ENCODE measurements at regions of chr1 and their contacts with region 1.

Region 1: GRCh38 chr1:11352816-11353799 is 80.1 kb downstream of the UBIAD1 start:
- DNase-seq: peak; percentile 37 to 71 (median 59)
- H3K4me3 ChIP-seq: peak overlapping the region in 6 of 7 experiments; percentile 0 to 62 (median 26)
- H3K27ac ChIP-seq: peak overlapping the region in 1 of 2 experiments; percentile 52
- H3K4me1 ChIP-seq: peaks cover 0 to 46% (median 36%) of the 10 kb centered on the region in 4 experiments
- H3K27me3 ChIP-seq: no peaks in the 10 kb centered on the region

Region 2: DNA sequence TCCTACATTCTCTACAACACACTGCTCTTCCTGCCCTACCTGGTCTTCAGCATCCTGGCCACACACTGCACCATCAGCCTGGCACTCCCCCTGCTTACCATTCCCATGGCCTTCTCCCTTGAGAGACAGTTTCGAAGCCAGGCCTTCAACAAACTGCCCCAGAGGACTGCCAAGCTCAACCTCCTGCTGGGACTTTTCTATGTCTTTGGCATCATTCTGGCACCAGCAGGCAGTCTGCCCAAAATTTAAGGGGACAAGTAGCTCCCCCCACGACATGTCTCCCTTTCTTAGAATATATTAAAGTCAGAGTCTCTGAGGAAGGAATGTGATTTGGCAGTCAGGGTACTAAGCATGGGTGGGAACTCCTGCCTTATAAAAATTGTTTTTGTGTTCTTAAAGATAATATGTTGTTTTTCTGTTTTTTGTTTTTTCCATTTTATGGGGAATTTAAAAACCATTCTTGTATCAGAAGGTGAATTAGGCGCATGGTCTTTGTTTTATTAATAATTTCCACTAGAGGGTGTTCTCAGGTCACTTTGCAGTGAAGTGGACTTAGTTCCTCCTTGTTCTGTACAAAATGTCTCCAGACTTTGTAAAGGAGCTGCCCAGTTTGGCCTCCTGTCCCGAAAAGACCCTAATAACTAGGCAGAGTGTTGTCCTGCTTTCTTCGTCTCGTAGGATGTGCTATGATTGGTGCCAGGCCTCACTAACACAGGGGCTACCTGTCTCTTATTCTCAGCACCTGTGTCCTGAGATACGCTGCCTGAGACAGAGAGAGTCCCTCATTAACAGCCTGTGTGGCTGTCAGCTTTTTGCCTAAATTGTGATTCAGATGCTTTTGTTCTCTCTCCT is 67.0 kb before region 1 on chr1:
- CTCF ChIA-PET with region 1: no interaction called
- POLR2A ChIA-PET with region 1: no interaction called
- DNase-seq: peak in 2 of 3 donors; percentile 25 to 28
- H3K4me3 ChIP-seq: no peak overlapping the region
- H3K27ac ChIP-seq: no peak overlapping the region
- H3K4me1 ChIP-seq: peaks cover 2 to 11% (median 8%) of the 10 kb centered on the region in 4 experiments
- H3K27me3 ChIP-seq: no peaks in the 10 kb centered on the region

Region 3: DNA sequence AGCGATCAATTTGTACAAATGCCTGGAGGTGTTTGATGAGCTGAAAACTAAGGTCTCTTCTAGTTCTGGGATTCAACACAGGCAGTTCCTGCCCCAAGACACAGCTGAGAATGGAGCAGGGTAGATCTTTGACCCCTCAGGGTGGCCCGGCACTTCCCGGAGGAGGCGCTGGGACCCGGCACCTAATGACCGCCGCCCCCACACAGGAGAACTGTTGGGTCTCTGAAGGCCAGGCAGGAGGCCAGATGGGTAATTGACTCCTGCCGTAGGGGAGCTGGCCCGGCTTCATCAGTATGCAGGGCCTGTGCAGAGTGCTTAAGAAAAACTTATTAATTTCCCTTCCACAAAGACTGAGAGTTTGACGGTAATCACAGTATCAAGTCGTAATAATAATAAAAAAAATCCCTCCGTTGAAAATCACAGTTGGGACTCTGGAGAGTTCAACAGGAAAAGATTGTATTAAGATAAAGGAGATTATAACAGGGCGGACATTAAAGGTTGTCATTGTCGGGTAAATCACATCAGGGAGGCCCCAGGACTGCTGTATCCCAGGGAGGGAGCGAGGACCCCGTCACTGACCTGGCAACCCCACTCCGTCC is 28.4 kb before region 1 on chr1:
- CTCF ChIA-PET with region 1: no interaction called
- POLR2A ChIA-PET with region 1: no interaction called
- DNase-seq: no peak
- H3K4me3 ChIP-seq: no peak overlapping the region
- H3K27ac ChIP-seq: no peak overlapping the region
- H3K4me1 ChIP-seq: no peaks in the 10 kb centered on the region
- H3K27me3 ChIP-seq: peaks cover 0 to 2% (median 0%) of the 10 kb centered on the region in 5 experiments

Region 4: DNA sequence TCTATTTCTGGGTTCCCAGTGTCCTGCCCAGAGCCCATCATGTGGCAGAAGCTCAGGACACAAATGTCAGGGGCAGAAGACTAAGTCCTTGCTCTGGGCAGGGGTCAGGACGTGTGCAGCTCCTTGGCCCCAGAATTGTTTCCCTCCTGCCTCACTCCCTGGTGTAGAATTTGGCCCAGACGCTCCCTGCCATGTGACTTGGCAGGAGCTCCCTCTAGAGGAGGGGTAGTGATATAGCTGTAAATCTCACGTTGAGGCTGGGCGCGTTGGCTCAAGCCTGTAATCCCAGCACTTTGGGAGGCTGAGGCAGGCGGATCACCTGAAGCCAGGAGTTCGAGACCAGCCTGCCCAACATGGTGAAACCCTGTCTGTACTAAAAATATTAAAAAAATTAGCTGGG is 11.1 kb after region 1 on chr1:
- CTCF ChIA-PET with region 1: interaction called, 12 read pairs
- POLR2A ChIA-PET with region 1: no interaction called
- DNase-seq: peak; percentile 41 to 61 (median 42)
- H3K4me3 ChIP-seq: no peak overlapping the region
- H3K27ac ChIP-seq: no peak overlapping the region
- H3K4me1 ChIP-seq: no peaks in the 10 kb centered on the region
- H3K27me3 ChIP-seq: no peaks in the 10 kb centered on the region

Region 5: GRCh38 chr1:11377001-11377583 is 24.0 kb after region 1 on chr1:
- CTCF ChIA-PET with region 1: no interaction called
- POLR2A ChIA-PET with region 1: no interaction called
- DNase-seq: no peak
- H3K4me3 ChIP-seq: no peak overlapping the region
- H3K27ac ChIP-seq: no peak overlapping the region
- H3K4me1 ChIP-seq: peaks cover 0 to 4% (median 0%) of the 10 kb centered on the region in 4 experiments
- H3K27me3 ChIP-seq: no peaks in the 10 kb centered on the region

Measured in common myeloid progenitor, CD34-positive (primary cell).